ENCODE measurements at regions of chr1 and their contacts with region 1.

Region 1: DNA sequence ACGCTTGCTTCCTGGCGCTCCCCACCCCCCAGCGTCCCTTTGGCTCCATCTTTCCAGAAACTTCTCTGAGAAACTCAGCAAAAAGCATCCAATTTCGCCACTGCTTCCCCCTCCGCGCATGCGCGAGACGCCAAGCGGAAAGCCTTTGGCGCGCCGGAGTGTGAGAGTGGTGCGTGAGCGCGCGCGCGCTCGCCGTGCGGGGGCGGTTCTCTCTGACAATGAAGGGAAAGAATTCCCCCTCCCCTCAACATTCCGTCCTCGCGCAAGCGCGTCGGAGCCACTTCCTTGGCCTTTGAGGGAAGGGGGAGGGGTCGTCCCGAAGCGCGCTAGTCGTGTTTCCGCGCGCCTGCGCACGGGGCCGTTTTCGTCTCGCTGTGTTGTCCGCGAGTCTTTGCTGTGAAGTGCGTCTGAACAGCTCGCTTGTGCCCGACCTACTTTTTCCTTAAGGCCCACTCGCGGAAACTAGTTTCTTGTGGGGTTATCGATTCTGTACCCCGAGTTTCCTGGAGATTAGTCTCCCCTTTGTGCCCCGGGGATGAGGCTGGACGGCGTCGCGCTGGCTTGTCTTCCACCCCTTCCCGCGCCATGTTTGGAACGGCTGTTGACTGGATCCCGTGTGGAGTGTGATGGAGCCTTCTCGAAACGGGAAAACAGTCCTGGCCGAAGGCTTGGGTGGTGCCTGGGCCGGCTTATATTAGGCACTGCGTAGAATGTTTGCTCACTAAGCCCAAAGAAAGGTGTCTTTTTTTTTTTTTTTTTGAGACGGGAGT is 11.6 kb upstream of the SPEN start:
- H3K4me3 ChIP-seq: peak overlapping the region; percentile 79
- H3K27ac ChIP-seq: peak overlapping the region; percentile 98
- H3K4me1 ChIP-seq: peaks cover 5% of the 10 kb centered on the region
- CTCF ChIP-seq: no peak; the same call in 1 of the 2 replicates

Region 2: DNA sequence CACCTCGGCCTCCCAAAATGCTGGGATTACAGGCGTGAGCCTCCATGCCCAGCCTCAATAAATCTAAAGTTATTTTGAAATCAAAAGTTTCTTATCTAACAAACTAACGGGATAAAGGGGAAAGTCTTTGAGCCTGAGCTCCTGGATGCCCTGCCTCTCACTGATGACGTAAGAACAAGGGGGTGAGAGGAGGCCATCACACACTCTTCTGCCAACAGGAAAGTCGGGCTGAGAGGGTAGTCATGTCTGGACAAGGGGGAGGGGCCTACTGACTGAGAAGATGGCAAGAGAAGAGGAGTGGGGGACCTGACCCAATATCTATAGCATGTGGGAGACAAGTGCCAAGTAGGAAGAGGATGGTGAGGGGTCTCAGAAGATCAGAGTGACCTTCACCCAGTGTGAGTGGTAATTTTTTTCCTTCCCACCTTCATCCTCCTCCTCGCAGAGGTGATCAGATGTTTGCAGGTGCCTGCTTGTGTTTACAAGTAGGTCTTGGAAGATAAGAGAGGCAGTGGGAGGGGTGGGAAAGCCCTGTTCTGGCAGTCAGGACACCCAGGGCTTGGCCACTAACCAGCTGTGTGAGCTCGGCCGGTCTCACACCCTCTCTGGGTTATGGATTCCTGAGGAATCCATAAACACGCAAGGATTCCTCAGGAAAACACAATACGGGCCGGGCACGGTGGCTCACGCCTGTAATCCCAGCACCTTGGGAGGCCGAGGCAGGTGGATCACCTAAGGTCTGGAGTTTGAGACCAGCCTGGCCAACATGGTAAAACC is 38.1 kb before region 1 on chr1:
- CTCF ChIA-PET with region 1: interaction called, 5 read pairs
- POLR2A ChIA-PET with region 1: interaction called, 26 read pairs
- H3K4me3 ChIP-seq: no peak overlapping the region
- H3K27ac ChIP-seq: no peak overlapping the region
- H3K4me1 ChIP-seq: peaks cover 12% of the 10 kb centered on the region
- CTCF ChIP-seq: no peak

Region 3: DNA sequence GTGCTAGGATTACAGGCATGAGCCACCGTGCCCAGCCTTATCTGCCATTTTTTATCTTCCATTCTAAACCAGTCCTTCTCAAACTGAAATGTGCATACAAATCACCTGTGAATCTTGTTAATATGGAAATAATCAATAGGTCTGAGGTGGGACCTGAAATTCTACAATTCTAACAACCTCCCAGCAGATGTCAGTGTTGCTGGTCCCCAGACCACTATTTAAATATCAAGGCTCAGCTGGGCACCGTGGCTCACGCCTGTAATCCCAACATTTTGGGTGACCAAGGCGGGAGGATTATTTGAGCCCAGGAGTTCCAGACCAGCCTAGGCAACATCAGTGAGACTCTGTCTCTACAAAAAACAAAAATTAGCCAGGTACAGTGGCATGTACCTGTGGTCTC is 32.6 kb before region 1 on chr1:
- CTCF ChIA-PET with region 1: interaction called, 5 read pairs
- POLR2A ChIA-PET with region 1: interaction called, 26 read pairs
- H3K4me3 ChIP-seq: no peak overlapping the region
- H3K27ac ChIP-seq: no peak overlapping the region
- H3K4me1 ChIP-seq: peaks cover 9% of the 10 kb centered on the region
- CTCF ChIP-seq: no peak

Region 4: GRCh38 chr1:15820478-15820877 is 15.4 kb before region 1 on chr1:
- CTCF ChIA-PET with region 1: interaction called, 8 read pairs
- POLR2A ChIA-PET with region 1: interaction called, 31 read pairs
- H3K4me3 ChIP-seq: no peak overlapping the region
- H3K27ac ChIP-seq: no peak overlapping the region
- H3K4me1 ChIP-seq: no peaks in the 10 kb centered on the region
- CTCF ChIP-seq: no peak

Region 5: DNA sequence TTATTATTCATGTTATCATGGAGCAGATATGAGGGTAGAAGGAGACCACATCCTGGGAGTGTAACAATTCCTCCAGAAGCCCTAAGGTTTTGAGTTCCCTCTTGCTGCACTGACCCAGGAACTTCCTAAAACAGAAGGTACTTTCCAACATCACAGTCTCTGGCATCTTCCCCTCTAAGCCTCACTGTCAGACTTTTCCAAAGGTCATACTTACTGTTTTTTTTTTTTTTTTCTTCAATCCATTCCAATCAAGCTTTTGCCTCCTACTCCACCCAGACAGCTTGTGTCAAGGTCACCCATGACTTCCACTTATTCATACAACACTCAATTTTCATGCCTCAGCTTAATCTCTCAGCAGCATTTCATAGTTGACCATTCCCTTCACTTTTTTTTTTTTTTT is 10.1 kb before region 1 on chr1:
- CTCF ChIA-PET with region 1: interaction called, 3 read pairs
- POLR2A ChIA-PET with region 1: interaction called, 31 read pairs
- H3K4me3 ChIP-seq: no peak overlapping the region
- H3K27ac ChIP-seq: no peak overlapping the region
- H3K4me1 ChIP-seq: peaks cover 5% of the 10 kb centered on the region
- CTCF ChIP-seq: no peak

Region 6: DNA sequence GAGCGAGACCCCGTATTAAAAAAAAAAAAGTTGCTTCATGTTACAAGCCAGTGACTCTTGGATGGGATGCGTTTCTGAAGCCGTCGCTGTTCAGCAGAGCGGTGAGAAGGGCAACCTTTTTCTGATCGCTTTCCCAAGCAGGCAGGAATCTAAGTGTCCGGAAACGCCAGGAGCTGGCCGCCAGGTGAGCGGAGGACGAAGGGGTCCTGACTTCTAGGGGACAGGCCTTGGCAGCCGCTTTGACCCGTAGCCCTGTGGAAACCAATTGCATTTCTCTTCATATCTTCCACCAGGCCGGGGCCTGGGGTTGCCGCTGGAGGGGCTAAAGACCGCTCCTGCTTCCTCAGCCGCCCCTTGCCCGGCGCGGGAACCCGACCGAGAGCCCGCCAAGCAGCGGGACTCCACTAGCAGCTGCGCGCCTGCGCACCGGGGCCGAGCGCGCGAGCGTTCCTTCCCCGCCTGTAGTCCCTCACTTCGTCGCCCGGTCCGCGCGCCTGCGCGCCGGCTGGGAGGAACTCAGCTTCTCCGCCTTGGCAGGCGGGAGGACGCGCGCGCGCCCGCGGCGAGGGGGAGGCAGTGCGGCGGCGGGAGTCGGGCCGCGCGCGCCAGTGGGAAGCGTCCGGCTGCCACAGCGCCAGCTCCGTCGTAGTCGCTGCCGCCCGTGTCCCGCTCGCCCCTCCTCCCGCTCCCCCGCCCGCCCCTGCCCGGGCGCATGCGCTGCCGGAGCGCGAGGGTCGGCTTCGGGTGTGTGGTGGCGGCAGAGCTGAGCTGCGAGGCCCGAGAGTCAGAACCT is 11.4 kb after region 1 on chr1 and contains the start of gene SPEN:
- CTCF ChIA-PET with region 1: interaction called, 3 read pairs
- POLR2A ChIA-PET with region 1: interaction called, 106 read pairs
- H3K4me3 ChIP-seq: peak within 1 kb of the TSS; percentile 87
- H3K27ac ChIP-seq: peak within 1 kb of the TSS; percentile 98
- H3K4me1 ChIP-seq: peaks cover 18% of the 10 kb centered on the region
- CTCF ChIP-seq: peak; percentile 45; the same call in 1 of the 2 replicates

Region 7: GRCh38 chr1:15885701-15886610 is 50.0 kb after region 1 on chr1:
- CTCF ChIA-PET with region 1: interaction called, 4 read pairs
- POLR2A ChIA-PET with region 1: interaction called, 10 read pairs
- H3K4me3 ChIP-seq: peak overlapping the region; percentile 32
- H3K27ac ChIP-seq: peak overlapping the region; percentile 70
- H3K4me1 ChIP-seq: peaks cover 17% of the 10 kb centered on the region
- CTCF ChIP-seq: no peak

Region 8: GRCh38 chr1:16307222-16307621 is 471.3 kb after region 1 on chr1:
- CTCF ChIA-PET with region 1: no interaction called
- POLR2A ChIA-PET with region 1: no interaction called
- H3K4me3 ChIP-seq: no peak overlapping the region
- H3K27ac ChIP-seq: no peak overlapping the region
- H3K4me1 ChIP-seq: no peaks in the 10 kb centered on the region
- CTCF ChIP-seq: no peak